Esophagus muscularis mucosa (tissue), 4 donors: ENCODE measurements at regions of chr1 and their contacts with region 1.

Region 1: DNA sequence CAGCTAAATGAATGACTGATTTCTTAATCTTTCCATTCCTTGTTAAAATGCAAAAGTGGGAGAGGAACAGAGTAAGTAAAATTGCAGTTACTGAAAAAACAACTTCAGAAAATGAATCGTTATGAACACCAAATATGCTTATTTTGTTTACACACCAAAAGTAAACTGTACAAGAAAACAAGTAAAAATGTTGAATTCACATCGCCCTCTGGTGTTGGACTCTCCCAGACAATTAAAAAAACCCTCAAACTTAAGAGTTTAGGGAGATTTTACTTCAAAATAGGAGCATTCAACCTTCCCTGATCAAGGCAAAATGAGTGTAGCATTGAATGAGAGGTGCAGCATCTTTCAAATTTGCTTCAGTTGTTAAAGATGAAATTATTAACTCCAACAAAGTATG is 19.4 kb upstream of the ESRRG start:
- DNase-seq: no peak
- H3K4me3 ChIP-seq: no peak overlapping the region
- H3K27ac ChIP-seq: no peak overlapping the region
- H3K4me1 ChIP-seq: peaks cover 0 to 3% (median 0%) of the 10 kb centered on the region in 4 donors
- H3K27me3 ChIP-seq: no peaks in the 10 kb centered on the region
- CTCF ChIP-seq: peak in 1 of 3 experiments; percentile 23
- EP300 ChIP-seq: no peak
- POLR2A ChIP-seq: no peak

Region 2: GRCh38 chr1:217124408-217124807 is 381.8 kb after region 1 on chr1:
- intact Hi-C with region 1: no loop called
- DNase-seq: no peak
- H3K4me3 ChIP-seq: no peak overlapping the region
- H3K27ac ChIP-seq: no peak overlapping the region
- H3K4me1 ChIP-seq: peaks cover 0 to 8% (median 5%) of the 10 kb centered on the region in 4 donors
- H3K27me3 ChIP-seq: no peaks in the 10 kb centered on the region
- CTCF ChIP-seq: no peak
- EP300 ChIP-seq: no peak
- POLR2A ChIP-seq: no peak

Region 3: DNA sequence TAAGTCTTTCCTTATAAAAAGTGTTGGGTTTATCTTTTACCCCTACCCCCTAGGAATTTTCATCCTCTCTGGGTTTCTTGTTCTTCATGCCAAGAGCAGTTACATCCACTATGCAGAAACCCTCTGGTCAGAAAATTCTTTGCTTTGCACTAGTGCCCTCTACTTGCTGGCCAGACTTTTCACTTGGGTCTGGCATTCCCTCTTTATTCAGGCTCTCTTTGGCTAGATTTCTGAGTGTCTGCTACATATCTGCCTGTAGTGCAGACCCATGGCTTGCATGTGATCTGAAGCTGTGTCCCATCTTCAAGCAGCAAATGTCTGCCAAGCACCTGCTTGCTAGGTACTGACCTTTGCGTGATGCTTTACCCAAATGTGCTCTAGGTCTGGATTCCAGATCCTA is 651.3 kb after region 1 on chr1:
- intact Hi-C with region 1: loop called (anchors 10 kb)
- DNase-seq: peak; percentile 55
- H3K4me3 ChIP-seq: no peak overlapping the region
- H3K27ac ChIP-seq: no peak overlapping the region
- H3K4me1 ChIP-seq: peaks cover 0 to 6% (median 0%) of the 10 kb centered on the region in 4 donors
- H3K27me3 ChIP-seq: no peaks in the 10 kb centered on the region
- CTCF ChIP-seq: peak; percentile 40 to 49 (median 48)
- EP300 ChIP-seq: no peak
- POLR2A ChIP-seq: no peak